SK-N-SH (cell line): ENCODE measurements at regions of chr10 and their contacts with region 1.

Region 1: DNA sequence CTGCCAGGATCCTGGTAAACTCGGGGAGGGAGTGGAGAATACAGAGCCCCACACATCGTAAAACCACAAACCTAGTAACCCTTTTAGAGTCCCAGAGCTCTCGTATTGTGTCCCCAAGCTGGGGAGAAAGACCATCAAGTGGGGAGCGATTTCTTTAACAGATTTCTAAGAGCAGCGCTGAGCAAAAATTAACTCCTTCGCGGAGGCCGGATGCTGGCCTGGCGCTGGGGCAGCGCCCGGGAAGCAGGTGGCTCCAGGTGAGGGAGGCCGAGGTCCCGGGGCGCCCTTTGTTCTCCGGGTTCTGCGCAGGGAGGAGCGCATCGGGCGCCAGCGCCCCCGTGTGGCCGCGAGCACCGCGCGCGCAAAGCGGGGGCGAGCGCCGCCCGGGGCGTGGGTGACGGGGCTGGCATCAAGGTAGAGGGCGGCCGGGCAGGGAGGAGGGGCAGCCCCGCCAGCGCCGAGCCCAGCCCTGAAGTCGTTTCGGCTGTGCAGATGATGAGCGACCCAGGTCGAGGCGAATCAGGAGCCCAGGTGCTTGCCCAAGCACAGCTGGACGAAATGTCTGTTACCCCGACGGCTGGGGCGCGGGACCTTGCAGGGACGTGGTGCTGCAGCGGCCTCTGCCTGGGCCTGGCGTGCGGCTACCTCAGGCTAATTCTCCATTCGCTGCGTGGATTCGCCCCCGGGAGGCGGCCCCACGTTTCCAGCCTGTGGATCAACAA is 10.4 kb upstream of the FGFR2 start:
- DNase-seq: peak; percentile 97
- H3K4me3 ChIP-seq: peak overlapping the region; percentile 36 to 62
- H3K27ac ChIP-seq: no peak overlapping the region
- H3K4me1 ChIP-seq: no peaks in the 10 kb centered on the region; a peak in 1 of 4 replicates
- H3K27me3 ChIP-seq: no peaks in the 10 kb centered on the region; the same call in 1 of the 2 replicates
- CTCF ChIP-seq: peak; percentile 96
- EP300 ChIP-seq: no peak
- RAD21 ChIP-seq: peak; percentile 73

Region 2: GRCh38 chr10:120948889-120949608 is 659.6 kb before region 1 on chr10:
- CTCF ChIA-PET with region 1: interaction called, 38 read pairs
- POLR2A ChIA-PET with region 1: no interaction called
- DNase-seq: peak; percentile 86
- H3K4me3 ChIP-seq: no peak overlapping the region; a peak in 1 of 4 replicates
- H3K27ac ChIP-seq: no peak overlapping the region
- H3K4me1 ChIP-seq: no peaks in the 10 kb centered on the region; a peak in 1 of 4 replicates
- H3K27me3 ChIP-seq: no peaks in the 10 kb centered on the region
- CTCF ChIP-seq: peak; percentile 53
- EP300 ChIP-seq: no peak
- RAD21 ChIP-seq: peak; percentile 69

Region 3: GRCh38 chr10:121598207-121598862 is 10.3 kb before region 1 on chr10 and contains the start of gene FGFR2:
- CTCF ChIA-PET with region 1: interaction called, 39 read pairs
- POLR2A ChIA-PET with region 1: no interaction called
- DNase-seq: peak; percentile 98
- H3K4me3 ChIP-seq: peak within 1 kb of the TSS; percentile 46 to 61
- H3K27ac ChIP-seq: no peak within 1 kb of the TSS
- H3K4me1 ChIP-seq: peaks cover 0 to 14% of the 10 kb centered on the region in 2 experiments; a peak in 1 of 4 replicates
- H3K27me3 ChIP-seq: peaks cover 18% of the 10 kb centered on the region
- CTCF ChIP-seq: no peak
- EP300 ChIP-seq: peak in 1 of 2 experiments; percentile 44; a peak in 1 of 4 replicates
- RAD21 ChIP-seq: no peak
- polyA plus RNA-seq, gene FGFR2: 0.02 TPM in 1 of 2 replicates, not detected in the other

Region 4: DNA sequence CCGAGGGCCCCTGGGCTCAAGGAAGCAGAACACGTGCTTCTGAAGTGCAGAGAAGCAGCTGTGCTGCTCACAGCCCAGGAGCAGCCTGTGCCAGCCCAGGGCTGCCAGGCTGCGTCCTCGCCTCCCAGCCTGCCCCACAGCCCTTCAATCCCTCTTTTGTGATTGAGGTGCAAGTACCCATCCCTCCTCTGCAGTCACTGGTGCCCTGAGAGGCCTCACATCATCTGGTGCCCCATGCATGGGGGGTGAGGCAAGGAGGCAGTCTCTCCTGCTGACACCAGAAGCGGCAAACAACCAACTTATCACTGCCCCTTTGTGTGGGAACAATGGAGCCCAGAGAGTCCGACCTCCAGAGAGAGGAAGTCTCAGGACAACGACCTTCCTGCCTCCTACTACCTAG is 39.4 kb after region 1 on chr10:
- CTCF ChIA-PET with region 1: interaction called, 10 read pairs
- POLR2A ChIA-PET with region 1: no interaction called
- DNase-seq: no peak
- H3K4me3 ChIP-seq: no peak overlapping the region
- H3K27ac ChIP-seq: no peak overlapping the region
- H3K4me1 ChIP-seq: peaks cover 0 to 11% of the 10 kb centered on the region in 2 experiments; a peak in 1 of 4 replicates
- H3K27me3 ChIP-seq: no peaks in the 10 kb centered on the region
- CTCF ChIP-seq: no peak
- EP300 ChIP-seq: no peak
- RAD21 ChIP-seq: no peak

Region 5: GRCh38 chr10:121709675-121710073 is 101.0 kb after region 1 on chr10:
- CTCF ChIA-PET with region 1: interaction called, 13 read pairs
- POLR2A ChIA-PET with region 1: no interaction called
- DNase-seq: no peak
- H3K4me3 ChIP-seq: no peak overlapping the region
- H3K27ac ChIP-seq: peak overlapping the region; percentile 30 to 90; a peak in 3 of 4 replicates
- H3K4me1 ChIP-seq: peaks cover 0 to 19% of the 10 kb centered on the region in 2 experiments; a peak in 2 of 4 replicates
- H3K27me3 ChIP-seq: no peaks in the 10 kb centered on the region
- CTCF ChIP-seq: no peak
- EP300 ChIP-seq: no peak
- RAD21 ChIP-seq: no peak

Region 6: DNA sequence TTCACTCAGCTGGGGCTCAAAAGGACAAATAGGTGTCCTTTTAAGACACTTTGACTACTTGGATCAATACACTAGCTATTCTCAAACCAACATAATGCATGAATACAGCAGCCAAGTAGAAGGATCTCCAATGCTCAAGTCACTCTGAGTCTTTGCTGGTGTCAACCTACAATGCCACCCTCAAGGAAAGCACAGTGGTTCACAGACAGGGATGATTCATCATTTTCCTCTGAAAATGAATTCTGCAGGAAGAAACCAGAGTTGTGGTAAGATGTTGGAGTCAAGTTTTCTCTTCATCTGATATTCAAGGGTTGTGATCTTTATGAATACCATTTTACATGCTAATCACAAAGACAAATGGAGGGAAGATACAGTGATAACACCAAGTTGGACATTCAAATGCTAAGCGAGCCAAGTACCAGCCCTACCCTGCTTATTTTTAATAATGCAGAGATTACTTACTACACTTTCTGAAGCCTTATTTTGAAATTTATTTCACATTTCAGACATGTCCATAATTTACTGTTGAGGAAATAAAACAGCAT is 132.7 kb after region 1 on chr10:
- CTCF ChIA-PET with region 1: interaction called, 56 read pairs
- POLR2A ChIA-PET with region 1: no interaction called
- DNase-seq: no peak
- H3K4me3 ChIP-seq: no peak overlapping the region
- H3K27ac ChIP-seq: no peak overlapping the region; a peak in 1 of 4 replicates
- H3K4me1 ChIP-seq: peaks cover 5 to 22% of the 10 kb centered on the region in 2 experiments; a peak in 2 of 4 replicates
- H3K27me3 ChIP-seq: no peaks in the 10 kb centered on the region
- CTCF ChIP-seq: no peak
- EP300 ChIP-seq: no peak
- RAD21 ChIP-seq: no peak